ENCODE measurements at regions of chr3 and their contacts with region 1.

Region 1: DNA sequence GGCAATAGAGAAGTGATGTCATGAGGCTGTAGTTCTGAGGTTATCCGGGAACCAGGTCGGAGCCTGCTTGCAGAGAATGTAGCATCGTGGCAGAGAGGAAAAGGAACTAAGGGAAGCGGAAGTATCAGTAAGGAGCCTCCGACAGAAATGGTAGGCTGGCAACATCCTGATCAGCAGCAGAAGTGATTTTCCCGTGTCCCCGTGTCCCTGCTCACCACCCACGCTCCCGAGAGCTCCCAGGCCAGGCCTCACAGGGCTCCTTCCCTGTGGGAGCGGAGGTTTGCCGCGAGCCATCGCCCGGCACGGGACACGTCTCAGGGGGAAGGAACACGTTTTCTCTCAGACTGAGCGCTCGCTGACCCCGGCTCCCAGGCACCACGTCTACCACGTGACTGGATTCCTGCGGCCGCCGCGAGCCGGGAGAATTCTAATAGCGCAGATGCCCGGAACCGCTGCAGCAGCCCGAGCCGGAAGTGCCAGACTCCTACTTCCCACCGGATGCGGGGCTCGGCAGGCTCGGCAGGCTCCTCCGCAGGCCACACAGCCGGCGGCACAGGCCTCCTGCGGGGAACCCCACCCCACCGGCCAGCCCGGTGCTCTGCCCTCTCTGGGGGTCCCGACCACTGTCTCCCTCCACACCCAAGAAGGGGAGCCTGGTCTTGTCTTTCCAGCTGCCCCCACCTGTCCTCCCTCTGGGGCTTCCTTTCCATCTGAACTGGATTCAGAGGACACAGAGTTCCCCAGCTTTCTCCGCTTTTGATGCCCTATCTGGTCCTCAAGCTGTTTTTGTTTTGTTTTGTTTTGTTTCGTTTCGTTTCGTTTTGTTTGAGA is 99.3 kb downstream of the BDH1 start:
- DNase-seq: peak in 2 of 5 donors; percentile 15 to 39
- H3K4me3 ChIP-seq: peak overlapping the region; percentile 70 to 78
- H3K4me3 Mint-ChIP-seq: peak overlapping the region; percentile 91 to 97 (median 94)
- H3K27ac ChIP-seq: peak overlapping the region; percentile 32
- H3K27ac Mint-ChIP-seq: peak overlapping the region; percentile 41 to 94 (median 87)
- H3K4me1 ChIP-seq: peaks cover 16% of the 10 kb centered on the region
- H3K4me1 Mint-ChIP-seq: peaks cover 10 to 27% (median 17%) of the 10 kb centered on the region in 4 donors
- H3K27me3 ChIP-seq: no peaks in the 10 kb centered on the region
- H3K27me3 Mint-ChIP-seq: peaks cover 0 to 1% of the 10 kb centered on the region in 2 donors

Region 2: DNA sequence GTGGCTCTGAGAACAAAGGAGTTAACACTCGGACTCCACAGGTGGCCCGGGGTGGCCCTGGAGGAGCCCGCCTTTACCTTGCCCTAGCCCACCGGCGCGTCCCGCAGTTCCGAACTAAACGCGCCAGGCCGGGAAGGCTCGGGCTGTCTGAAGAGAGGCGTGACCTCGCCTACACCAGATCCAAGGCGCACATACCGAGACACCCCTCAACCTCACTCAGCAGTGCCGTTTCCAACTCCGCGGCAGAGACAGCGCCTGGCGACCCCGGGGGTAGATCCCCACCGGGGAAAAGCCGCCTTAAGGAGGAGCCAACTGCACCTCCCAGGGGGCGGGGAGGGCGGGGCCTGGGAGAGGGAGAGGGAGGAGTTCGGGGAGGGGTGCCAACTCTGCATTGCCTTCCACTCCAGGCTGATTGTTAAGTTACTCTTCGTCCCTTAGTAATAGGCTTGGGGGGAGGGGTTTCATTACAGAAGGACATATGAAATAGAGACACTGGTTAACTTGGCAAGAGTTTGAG is 158.1 kb before region 1 on chr3 and contains the start of gene DLG1:
- CTCF ChIA-PET with region 1: no interaction called
- POLR2A ChIA-PET with region 1: no interaction called
- intact Hi-C with region 1: loop called (anchors 2 kb)
- DNase-seq: peak in 4 of 5 donors; percentile 58 to 85 (median 66)
- H3K4me3 ChIP-seq: peak within 1 kb of the TSS; percentile 80 to 89
- H3K4me3 Mint-ChIP-seq: peak within 1 kb of the TSS; percentile 88 to 99 (median 95)
- H3K27ac ChIP-seq: peak within 1 kb of the TSS; percentile 73
- H3K27ac Mint-ChIP-seq: peak within 1 kb of the TSS; percentile 87 to 98 (median 96)
- H3K4me1 ChIP-seq: peaks cover 32% of the 10 kb centered on the region
- H3K4me1 Mint-ChIP-seq: peaks cover 15 to 41% (median 31%) of the 10 kb centered on the region in 4 donors
- H3K27me3 ChIP-seq: no peaks in the 10 kb centered on the region
- H3K27me3 Mint-ChIP-seq: peaks cover 2 to 8% of the 10 kb centered on the region in 2 donors
- total RNA-seq, gene DLG1: 86.8 to 92.1 TPM

Region 3: DNA sequence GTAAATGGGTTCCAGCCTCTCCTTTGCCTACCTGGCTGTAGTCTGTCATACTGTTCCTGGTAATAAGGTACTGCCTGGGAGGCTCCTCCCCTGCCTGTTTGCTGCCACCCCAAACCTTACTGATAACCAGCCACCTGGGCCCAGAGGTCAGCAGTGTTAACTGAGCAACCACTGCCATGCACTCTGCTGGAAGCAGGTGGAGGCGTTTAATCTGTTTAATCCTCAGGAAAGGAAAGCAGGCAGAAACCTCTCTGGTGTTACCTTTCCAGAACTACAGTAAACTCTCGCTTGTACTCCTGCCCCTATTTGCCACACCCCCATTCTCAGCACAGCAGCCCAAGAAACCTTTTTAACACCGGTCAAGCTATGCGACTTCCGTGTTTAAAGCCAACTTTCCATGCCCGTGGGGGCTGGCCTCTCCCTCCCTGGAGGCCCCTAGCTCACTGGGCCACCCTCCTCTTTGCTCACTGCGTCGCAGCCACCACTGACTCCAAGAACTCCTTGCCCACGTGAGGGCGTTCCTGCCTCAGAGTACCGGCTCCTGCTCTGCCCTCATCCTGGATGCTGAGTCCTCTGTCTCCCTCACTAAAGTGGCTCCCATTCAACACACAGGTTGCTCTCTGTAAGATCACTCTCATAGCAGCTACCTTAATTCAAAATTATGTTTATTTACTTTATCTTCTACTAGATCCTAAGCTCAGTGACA is 91.0 kb after region 1 on chr3:
- CTCF ChIA-PET with region 1: no interaction called
- POLR2A ChIA-PET with region 1: no interaction called
- intact Hi-C with region 1: no loop called
- DNase-seq: no peak
- H3K4me3 ChIP-seq: no peak overlapping the region
- H3K4me3 Mint-ChIP-seq: no peak overlapping the region
- H3K27ac ChIP-seq: no peak overlapping the region
- H3K27ac Mint-ChIP-seq: peak overlapping the region in 3 of 7 donors; percentile 19 to 84 (median 58)
- H3K4me1 ChIP-seq: no peaks in the 10 kb centered on the region
- H3K4me1 Mint-ChIP-seq: peaks cover 4 to 7% (median 5%) of the 10 kb centered on the region in 4 donors
- H3K27me3 ChIP-seq: no peaks in the 10 kb centered on the region
- H3K27me3 Mint-ChIP-seq: no peaks in the 10 kb centered on the region

Measured in CD4-positive, alpha-beta memory T cell (primary cell).